A673 (cell line): ENCODE measurements at regions of chr14 and their contacts with region 1.

Region 1: DNA sequence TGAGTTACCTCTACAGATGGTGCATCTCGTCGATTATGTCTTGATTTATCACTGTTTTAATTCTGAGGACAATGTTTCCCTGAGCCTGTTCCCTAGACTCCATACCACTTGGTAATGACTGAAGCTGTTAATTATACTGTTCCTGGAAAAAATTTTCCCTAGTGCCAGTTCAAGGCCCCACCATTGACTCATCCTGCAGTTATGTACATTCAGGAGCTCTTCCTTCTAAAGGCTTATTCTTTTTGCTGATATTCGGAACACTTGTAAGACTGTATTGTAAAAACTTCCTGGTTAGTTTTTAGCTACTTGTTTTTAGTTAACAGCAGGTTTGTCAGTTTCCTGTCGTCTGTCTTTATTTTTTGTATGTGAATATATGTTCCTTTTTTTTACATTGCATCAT is 30.4 kb upstream of the PPP2R5E start:
- DNase-seq: no peak
- H3K4me3 ChIP-seq: no peak overlapping the region
- H3K27ac ChIP-seq: no peak overlapping the region
- H3K4me1 ChIP-seq: no peaks in the 10 kb centered on the region
- H3K27me3 ChIP-seq: no peaks in the 10 kb centered on the region
- CTCF ChIP-seq: no peak

Region 2: GRCh38 chr14:63155511-63156189 is 417.9 kb before region 1 on chr14:
- CTCF ChIA-PET with region 1: no interaction called
- POLR2A ChIA-PET with region 1: no interaction called
- intact Hi-C with region 1: loop called (anchors 5 kb)
- DNase-seq: peak; percentile 48
- H3K4me3 ChIP-seq: no peak overlapping the region
- H3K27ac ChIP-seq: no peak overlapping the region
- H3K4me1 ChIP-seq: peaks cover 5% of the 10 kb centered on the region
- H3K27me3 ChIP-seq: no peaks in the 10 kb centered on the region
- CTCF ChIP-seq: no peak

Region 3: GRCh38 chr14:63624203-63624602 is 50.6 kb after region 1 on chr14:
- CTCF ChIA-PET with region 1: interaction called, 10 read pairs
- POLR2A ChIA-PET with region 1: no interaction called
- intact Hi-C with region 1: no loop called
- DNase-seq: no peak
- H3K4me3 ChIP-seq: no peak overlapping the region
- H3K27ac ChIP-seq: no peak overlapping the region
- H3K4me1 ChIP-seq: no peaks in the 10 kb centered on the region
- H3K27me3 ChIP-seq: no peaks in the 10 kb centered on the region
- CTCF ChIP-seq: no peak